Activated CD4-positive, alpha-beta T cell treated with anti-CD3 and anti-CD28 coated beads for 36 hours (primary cell): ENCODE measurements at regions of chr5 and their contacts with region 1.

Region 1: DNA sequence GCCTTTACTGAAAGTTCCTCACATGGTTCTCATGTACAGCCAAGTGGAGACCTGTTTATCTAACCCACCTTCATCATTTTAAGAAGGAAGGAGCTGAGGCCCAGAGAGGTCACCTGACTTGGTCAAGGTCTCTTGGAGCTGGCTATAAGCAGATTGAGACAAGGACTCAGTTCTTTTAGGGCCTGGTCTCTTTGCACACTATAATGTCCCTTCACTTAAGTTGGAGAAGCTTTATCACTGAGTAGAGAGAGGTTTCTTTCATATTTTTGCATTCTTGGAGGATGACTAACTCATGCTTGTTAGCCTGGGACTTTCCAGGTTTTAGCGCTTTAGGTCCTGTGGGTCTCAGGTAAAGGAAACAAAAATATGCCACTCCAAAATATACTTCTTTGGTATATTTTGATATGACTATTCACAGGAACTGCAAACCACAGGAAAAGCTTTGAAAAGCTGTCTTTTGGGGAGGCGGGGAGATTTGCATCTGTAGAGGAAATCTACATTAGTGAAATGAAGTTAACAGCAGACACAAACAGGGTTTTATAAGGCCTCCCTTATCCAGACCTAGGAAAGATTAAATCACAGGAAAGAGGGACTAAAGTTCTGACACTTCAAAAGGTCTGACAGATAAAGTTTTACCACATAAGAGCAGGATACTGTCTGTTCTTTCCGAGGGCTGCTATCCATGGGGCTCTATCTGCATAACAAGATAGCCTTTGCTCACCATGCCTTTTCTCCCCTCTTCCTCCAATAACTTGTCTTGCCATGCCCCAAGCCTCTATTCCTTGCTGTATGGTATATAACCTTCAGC is 95.8 kb upstream of the ANKRD55 start:
- DNase-seq: peak; percentile 68
- ATAC-seq: peak; percentile 69
- H3K4me3 Mint-ChIP-seq: peak overlapping the region; percentile 34
- H3K27ac Mint-ChIP-seq: peak overlapping the region; percentile 93
- H3K4me1 Mint-ChIP-seq: peaks cover 66% of the 10 kb centered on the region
- H3K27me3 Mint-ChIP-seq: no peaks in the 10 kb centered on the region

Region 2: GRCh38 chr5:56095579-56096102 is 233.3 kb before region 1 on chr5:
- CTCF ChIA-PET with region 1: no interaction called
- POLR2A ChIA-PET with region 1: no interaction called
- intact Hi-C with region 1: loop called in 1 of 2 experiments (anchors 5 kb)
- DNase-seq: no peak
- ATAC-seq: no peak
- H3K4me3 Mint-ChIP-seq: peak overlapping the region; percentile 36
- H3K27ac Mint-ChIP-seq: peak overlapping the region; percentile 84
- H3K4me1 Mint-ChIP-seq: peaks cover 89% of the 10 kb centered on the region
- H3K27me3 Mint-ChIP-seq: no peaks in the 10 kb centered on the region

Region 3: GRCh38 chr5:56190497-56190896 is 138.5 kb before region 1 on chr5:
- CTCF ChIA-PET with region 1: no interaction called
- POLR2A ChIA-PET with region 1: no interaction called
- intact Hi-C with region 1: no loop called
- DNase-seq: peak; percentile 43
- ATAC-seq: peak; percentile 42
- H3K4me3 Mint-ChIP-seq: no peak overlapping the region
- H3K27ac Mint-ChIP-seq: no peak overlapping the region
- H3K4me1 Mint-ChIP-seq: peaks cover 16% of the 10 kb centered on the region
- H3K27me3 Mint-ChIP-seq: no peaks in the 10 kb centered on the region

Region 4: DNA sequence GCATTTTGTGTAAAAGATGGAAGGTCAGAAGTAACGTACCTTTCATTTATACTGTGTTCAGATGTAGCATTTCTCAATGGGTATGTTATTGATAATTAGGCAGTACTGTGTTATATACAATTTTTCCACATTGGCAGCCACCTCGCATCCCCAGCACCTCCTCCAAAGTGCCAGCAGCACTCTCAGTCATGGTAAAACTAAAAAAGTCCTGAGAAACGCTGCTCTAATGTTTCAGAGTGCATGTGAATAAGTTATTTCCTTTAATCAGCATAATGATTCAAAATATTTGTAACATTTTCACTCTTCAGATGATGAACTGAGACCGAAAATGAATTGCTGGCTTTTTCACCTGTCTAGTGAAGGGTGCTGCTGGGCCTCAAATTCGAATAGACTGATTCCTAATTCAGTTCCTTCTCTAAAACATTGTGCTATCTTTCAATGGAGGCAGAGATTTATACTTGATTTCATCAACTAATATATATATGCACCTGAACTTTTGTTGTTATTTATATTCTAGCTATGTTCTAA is 15.9 kb before region 1 on chr5:
- CTCF ChIA-PET with region 1: interaction called, 6 read pairs
- POLR2A ChIA-PET with region 1: interaction called, 7 read pairs
- intact Hi-C with region 1: loop called (anchors 1 to 2 kb)
- DNase-seq: peak; percentile 38
- ATAC-seq: peak; percentile 76
- H3K4me3 Mint-ChIP-seq: no peak overlapping the region
- H3K27ac Mint-ChIP-seq: no peak overlapping the region
- H3K4me1 Mint-ChIP-seq: peaks cover 47% of the 10 kb centered on the region
- H3K27me3 Mint-ChIP-seq: peaks cover 3% of the 10 kb centered on the region

Region 5: DNA sequence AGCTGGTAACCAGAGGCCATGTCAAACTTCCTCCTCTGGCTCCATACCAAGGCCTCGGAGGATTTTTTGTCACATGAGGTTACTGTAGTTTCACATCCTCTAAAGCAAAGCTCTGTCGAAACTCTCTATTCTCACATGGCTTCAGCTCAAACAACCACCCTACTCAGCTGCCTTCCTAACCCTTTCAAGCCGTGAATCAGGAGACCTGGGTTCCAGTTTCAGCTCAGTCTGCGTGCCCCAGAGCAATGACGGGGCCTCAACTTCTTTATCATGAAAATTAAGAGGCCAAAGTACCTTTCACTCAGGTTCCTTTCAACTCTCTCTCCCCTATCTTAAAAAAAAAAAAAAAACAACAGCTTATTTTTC is 341.1 kb after region 1 on chr5:
- CTCF ChIA-PET with region 1: no interaction called
- POLR2A ChIA-PET with region 1: no interaction called
- intact Hi-C with region 1: loop called in 1 of 2 experiments (anchors 2 kb)
- DNase-seq: peak; percentile 69
- ATAC-seq: peak; percentile 96
- H3K4me3 Mint-ChIP-seq: no peak overlapping the region
- H3K27ac Mint-ChIP-seq: no peak overlapping the region
- H3K4me1 Mint-ChIP-seq: peaks cover 39% of the 10 kb centered on the region
- H3K27me3 Mint-ChIP-seq: no peaks in the 10 kb centered on the region

Region 6: DNA sequence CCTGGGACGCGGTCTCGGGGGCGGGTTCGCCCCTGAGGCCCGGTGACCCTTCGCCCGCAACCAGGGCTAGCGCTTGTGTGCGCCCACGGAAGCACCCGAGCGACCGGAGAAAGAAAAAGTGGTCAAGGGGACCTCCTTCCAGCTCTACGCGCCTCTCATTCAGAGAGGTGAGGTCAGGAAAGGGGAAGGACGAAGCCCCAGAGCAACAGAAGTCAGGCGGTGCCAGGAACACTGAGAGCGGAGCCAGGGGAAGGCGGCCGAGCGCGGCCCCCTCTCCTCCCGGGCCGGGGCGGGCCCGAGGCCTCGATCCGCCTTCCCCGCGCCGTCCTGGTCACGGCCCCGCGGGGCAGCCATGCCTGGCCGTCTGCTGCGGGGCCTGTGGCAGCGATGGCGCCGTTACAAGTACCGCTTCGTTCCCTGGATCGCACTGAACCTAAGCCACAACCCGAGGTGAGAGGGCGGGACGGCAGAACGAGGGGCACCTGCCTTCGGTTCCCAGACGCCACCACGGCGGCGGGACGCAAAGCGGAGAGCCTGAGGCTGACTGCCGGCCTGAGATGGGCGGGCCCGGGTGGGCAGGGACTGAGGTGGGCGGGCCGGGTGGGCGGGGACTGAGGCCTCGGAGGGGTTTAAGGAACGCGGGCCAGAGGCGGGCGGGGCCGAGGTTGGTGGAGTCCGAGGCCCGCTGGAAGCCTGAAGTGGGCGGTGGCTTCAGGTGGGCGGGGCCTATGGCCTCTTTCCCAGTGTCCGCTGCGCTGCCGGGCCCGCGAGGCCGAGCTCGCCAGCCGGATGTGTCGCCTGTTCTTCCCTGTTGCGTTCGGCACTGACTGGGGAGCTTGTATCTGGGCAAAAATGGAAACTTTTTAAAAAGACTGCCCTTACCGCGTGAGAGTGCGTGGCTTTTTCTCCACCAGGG is 580.6 kb after region 1 on chr5 and contains the start of gene SETD9:
- CTCF ChIA-PET with region 1: no interaction called
- POLR2A ChIA-PET with region 1: no interaction called
- intact Hi-C with region 1: loop called in 1 of 2 experiments (anchors 2 kb)
- DNase-seq: peak; percentile 97
- ATAC-seq: peak; percentile 92
- H3K4me3 Mint-ChIP-seq: peak within 1 kb of the TSS; percentile 90
- H3K27ac Mint-ChIP-seq: peak within 1 kb of the TSS; percentile 94
- H3K4me1 Mint-ChIP-seq: peaks cover 20% of the 10 kb centered on the region
- H3K27me3 Mint-ChIP-seq: peaks cover 5% of the 10 kb centered on the region
- total RNA-seq, gene SETD9: 5.4 to 6.8 TPM